B cell (primary cell): ENCODE measurements at regions of chr2 and their contacts with region 1.

Region 1: DNA sequence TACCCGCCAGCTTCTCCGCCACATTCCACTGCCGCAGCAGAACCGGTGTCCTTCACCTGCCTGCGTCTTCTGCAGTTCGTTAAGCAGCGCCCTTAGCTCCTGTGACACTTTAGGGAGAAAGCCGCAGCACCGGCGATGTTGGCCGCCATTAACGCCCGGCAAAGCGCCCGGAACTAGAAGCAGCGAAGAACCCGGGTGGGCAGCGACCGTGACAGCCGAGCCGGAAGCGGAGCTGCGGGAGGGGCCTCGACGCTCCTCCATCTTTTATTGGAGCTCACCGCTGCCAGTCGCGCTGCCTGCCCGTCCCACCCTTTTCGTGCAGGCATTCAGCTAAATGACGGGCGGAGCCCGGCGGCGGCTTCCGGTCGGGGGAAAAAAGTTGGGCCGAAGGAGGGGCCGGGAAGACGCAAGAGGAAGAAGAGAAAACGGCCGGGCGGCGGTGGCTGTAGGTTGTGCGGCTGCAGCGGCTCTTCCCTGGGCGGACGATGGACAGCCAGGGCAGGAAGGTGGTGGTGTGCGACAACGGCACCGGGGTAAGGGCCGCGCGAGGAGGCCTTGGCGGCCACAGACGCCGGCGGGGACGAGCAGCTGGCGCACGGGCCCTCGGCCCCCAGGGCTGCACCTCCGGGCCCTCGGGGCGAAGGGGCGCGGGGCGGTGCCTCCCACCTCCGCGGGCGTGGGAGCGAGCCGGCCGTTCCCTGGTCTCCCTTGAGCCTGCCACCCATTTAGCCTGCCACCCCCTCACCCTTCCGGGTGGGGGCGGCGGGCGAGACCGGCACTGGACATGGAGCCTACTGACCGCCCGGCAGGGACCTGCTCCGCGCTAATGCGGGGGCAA is at the start of gene ACTR2:
- DNase-seq: peak; percentile 97
- ATAC-seq: peak; percentile 90
- H3K4me3 ChIP-seq: peak within 1 kb of the TSS; percentile 86 to 100 (median 98)
- H3K4me3 Mint-ChIP-seq: peak within 1 kb of the TSS; percentile 93
- H3K27ac ChIP-seq: peak within 1 kb of the TSS; percentile 97
- H3K27ac Mint-ChIP-seq: peak within 1 kb of the TSS; percentile 100
- H3K4me1 ChIP-seq: peaks cover 39 to 44% of the 10 kb centered on the region in 2 donors
- H3K4me1 Mint-ChIP-seq: peaks cover 37% of the 10 kb centered on the region
- H3K27me3 ChIP-seq: no peaks in the 10 kb centered on the region
- H3K27me3 Mint-ChIP-seq: no peaks in the 10 kb centered on the region
- CTCF ChIP-seq: no peak
- total RNA-seq, gene ACTR2: 270 and 284 TPM in 2 replicates

Region 2: DNA sequence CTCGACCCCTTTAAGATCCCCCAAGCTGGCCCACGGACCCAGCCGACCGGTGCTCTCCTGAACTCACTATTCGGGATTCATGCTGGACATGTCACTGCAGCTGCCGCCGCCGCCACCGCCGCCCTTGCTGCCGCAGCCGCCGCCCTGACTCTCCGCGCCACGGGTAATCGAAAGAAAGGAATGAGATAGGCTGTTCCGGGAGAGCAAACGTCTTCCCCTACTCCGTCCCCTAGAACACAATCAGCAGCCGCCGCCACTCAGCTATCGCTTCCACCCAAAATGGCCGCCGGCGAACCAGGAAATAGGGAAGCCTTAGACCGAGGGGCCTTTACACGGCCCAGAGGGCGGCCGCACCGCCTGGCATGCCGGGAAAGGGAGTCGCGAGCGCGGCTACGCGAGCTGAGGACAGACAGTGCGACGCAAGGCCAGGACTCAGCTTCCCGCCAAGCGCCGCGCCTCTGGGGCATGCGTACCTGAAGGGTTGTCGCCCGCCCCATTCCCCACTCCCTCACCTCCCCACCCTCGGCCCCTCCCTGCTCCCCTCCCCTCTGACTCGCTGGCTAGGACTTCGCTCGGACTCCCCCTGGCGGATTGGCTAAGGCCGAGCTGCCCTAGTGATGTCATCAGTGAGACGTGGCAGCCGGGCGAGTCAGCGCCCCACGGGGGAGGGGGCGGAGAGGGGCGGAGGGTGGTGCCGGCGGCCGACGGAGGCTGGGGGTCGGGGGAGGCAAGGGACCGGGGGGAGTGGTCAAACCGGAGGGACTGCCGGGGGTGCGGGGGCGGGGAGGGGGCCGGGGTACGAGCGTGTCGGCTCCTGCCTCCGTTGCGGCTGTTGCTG is 97.6 kb before region 1 on chr2 and contains the start of gene RAB1A:
- CTCF ChIA-PET with region 1: interaction called, 9 read pairs
- POLR2A ChIA-PET with region 1: interaction called, 13 read pairs
- intact Hi-C with region 1: loop called (anchors 1 kb)
- DNase-seq: peak; percentile 99
- ATAC-seq: peak; percentile 88
- H3K4me3 ChIP-seq: peak within 1 kb of the TSS; percentile 96 to 97 (median 97)
- H3K4me3 Mint-ChIP-seq: peak within 1 kb of the TSS; percentile 100
- H3K27ac ChIP-seq: peak within 1 kb of the TSS; percentile 94 to 98
- H3K27ac Mint-ChIP-seq: peak within 1 kb of the TSS; percentile 100
- H3K4me1 ChIP-seq: peaks cover 23 to 25% of the 10 kb centered on the region in 2 donors
- H3K4me1 Mint-ChIP-seq: peaks cover 38% of the 10 kb centered on the region
- H3K27me3 ChIP-seq: no peaks in the 10 kb centered on the region
- H3K27me3 Mint-ChIP-seq: no peaks in the 10 kb centered on the region
- CTCF ChIP-seq: no peak
- total RNA-seq, gene RAB1A: 42.2 and 43.7 TPM in 2 replicates